GM10248 (cell line): ENCODE measurements at regions of chr14 and their contacts with region 1.

Region 1: DNA sequence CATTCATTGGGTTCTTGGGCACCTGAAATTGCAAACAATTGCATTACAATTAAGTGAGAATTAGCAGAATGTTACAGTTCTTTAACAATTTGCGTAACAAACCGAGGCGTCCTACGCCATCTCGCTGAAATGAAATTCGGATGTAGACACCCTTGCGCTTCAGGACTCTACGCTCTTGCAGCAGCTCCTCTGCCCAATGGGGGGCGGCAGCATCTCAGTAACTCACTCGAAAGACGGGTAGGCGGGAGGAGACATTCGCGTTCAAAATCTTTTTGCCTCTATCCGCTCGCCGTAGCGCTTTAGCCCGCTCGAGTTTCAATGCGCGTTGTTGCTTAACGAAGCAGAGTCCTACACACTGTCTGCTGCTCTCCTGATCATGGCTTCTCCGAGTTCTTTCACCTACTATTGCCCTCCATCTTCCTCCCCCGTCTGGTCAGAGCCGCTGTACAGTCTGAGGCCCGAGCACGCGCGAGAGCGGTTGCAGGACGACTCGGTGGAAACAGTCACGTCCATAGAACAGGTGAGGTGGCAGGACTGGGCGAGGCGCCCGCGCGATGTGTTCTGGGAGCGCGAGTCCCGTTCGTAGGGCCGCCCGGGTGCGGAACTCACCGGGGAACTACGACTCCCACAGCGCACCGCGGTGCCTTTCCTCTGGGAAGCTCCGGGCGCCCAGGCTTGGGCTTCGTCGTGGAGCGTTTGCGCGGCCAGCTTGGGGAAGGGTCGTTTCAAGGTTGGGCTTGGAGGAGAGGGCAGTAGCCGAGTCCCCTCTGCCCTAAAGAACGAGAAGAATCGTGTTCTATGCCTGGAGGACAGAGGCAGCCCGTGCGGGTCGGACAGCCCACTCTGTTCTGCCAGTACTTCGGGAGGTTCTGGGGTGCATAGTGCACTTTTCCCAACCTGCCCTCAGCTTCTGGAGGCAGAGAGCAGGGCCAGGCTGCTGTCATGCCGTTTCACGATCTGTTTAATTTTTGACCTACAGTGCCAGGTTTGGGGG is at the start of gene FNTB:
- DNase-seq: peak; percentile 94
- CTCF ChIP-seq: peak; percentile 98

Region 2: DNA sequence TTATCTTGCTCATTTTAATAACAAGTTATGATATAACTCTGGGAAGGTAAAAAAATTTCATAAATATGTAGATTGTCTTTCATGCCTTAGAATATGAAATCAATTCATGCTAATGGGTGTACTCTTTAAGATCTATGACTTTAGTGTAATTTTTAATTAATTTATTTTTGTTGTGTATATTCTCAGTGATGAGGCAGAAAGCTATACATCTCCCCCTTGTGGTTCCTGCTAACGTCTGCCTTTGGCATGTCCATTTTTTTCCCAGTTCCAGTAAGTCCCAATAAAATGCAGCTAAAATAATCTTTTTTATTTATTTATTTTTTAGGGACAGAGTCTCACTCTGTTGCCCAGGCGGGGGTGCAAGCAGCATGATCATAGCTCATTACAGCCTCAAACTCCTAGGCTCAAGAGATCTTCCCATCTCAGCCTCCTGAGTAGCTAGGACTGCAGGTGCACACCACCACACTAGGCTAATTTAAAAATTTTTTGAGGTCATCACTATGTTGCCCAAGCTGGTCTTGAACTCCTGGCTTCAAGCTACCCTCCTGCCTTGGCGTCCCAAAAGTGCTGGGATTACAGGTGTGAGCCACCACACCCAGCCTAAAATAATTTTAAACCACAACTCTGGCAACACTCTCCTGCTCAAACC is 75.9 kb before region 1 on chr14:
- CTCF ChIA-PET with region 1: no interaction called
- POLR2A ChIA-PET with region 1: no interaction called
- DNase-seq: no peak
- CTCF ChIP-seq: peak; percentile 38

Region 3: DNA sequence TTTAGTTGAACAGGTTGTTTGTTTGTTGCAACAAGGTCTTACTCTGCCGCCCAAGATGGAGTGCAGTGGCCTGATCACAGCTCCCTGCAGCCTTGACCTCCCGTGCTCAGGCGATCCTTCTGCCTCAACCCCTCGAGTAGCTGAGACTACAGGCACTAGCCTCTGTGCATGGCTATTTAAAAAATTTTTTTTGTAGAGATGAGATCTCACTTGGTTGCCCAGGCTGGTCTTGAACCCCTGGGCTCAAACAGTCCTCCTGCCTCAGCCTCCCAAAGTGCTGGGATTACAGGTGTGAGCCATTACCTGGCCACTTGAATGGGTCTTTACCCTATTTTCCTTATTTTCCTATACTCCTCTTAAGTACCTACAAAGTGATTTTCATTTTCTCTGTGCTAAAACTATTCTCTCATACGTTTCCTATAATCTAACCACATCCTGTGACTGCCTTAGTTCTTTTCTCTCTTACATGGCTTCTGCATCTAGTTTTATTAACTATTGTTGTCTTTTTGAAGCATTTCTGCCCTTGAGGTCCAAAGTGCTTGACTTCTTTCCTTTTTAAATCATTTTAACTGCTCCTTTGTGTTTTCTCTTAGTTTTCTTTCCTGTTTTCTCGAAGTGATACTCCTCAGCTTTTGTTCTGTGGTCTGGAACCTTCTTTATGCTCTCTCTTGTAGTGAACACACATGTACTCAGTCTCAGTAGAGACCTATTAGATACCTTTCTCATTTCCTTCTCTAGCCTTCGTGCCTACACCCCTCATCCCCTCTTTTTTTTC is 58.4 kb before region 1 on chr14:
- CTCF ChIA-PET with region 1: interaction called, 12 read pairs
- POLR2A ChIA-PET with region 1: no interaction called
- DNase-seq: no peak
- CTCF ChIP-seq: no peak

Region 4: DNA sequence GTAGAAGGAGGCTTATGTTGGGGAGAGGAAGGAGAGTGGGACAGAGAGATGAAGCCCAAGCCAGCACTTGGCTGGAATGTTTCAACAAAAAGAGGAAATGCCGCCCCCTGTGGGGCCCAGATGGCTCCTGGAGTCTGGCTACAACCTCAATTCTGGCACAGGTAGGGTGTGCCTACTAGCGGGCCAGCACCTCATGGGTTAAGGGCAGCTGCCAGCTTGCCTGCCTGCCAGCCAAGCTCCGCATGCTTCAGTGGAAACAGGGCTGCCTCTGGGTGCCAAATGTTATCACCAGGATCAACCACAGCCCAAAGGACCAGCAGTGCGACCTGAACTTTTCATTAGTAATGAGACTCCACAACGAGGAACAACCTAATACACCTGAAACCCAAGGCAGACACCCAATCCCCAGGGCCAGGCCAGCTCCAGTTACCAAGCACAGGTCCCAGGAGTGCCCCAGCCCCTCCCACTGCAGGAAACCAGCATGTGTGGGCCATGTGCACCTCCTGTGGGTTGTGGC is 26.1 kb before region 1 on chr14:
- CTCF ChIA-PET with region 1: interaction called, 12 read pairs
- POLR2A ChIA-PET with region 1: no interaction called
- DNase-seq: no peak
- CTCF ChIP-seq: no peak

Region 5: DNA sequence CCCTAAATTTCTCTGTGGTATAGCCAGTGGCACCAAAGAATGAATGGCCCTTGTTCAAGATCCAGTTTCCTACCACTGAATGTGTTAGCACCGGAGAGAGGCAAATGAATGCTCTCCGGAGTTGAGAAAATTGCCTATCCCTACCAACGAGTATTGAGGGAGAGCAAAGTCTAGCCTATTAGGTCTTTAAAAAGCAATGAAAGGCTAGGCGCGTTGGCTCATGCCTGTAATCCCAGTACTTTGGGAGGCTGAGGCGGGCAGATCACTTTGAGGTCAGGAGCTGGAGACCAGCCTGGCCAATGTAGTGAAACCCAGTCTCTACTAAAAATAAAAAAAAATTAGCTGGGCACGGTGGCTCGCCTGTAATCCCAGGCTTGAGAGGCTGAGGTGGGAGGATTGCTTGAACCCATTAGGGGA is 13.8 kb before region 1 on chr14:
- CTCF ChIA-PET with region 1: interaction called, 31 read pairs
- POLR2A ChIA-PET with region 1: no interaction called
- DNase-seq: no peak
- CTCF ChIP-seq: no peak

Region 6: GRCh38 chr14:64997108-64997794 is 10.4 kb after region 1 on chr14:
- CTCF ChIA-PET with region 1: interaction called, 114 read pairs
- POLR2A ChIA-PET with region 1: no interaction called
- DNase-seq: no peak
- CTCF ChIP-seq: no peak

Region 7: DNA sequence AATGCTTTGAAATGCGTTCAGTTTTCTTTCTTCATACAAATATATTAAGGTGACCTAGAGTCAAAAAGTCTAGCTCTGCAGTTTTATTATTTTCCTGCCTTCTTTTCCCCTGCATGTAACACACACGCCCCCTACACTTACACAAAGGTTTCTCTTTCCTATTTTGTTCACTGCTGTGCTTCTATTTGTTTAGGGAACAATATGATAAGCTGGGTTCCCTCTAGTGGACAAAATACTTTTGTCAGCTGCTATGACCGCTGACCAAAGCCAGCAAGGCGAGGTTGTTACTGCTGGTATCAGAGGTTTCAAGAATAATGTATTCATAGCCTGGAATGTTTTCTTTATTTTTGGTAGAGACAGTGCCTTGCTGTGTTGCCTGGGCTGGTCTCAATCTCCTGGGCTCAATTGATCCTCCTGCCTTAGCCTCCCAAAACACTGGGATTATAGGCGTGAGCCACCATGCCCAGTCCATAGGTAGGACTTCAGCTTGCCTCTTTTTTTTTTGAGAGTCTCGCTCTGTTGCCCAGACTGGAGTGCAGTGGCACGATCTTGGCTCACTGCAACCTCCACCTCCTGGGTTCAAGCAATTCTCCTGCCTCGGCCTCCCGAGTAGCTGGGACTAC is 33.2 kb after region 1 on chr14:
- CTCF ChIA-PET with region 1: interaction called, 162 read pairs
- POLR2A ChIA-PET with region 1: interaction called, 3 read pairs
- DNase-seq: peak; percentile 60
- CTCF ChIP-seq: peak; percentile 61

Region 8: GRCh38 chr14:65062096-65063077 is 75.5 kb after region 1 on chr14:
- CTCF ChIA-PET with region 1: no interaction called
- POLR2A ChIA-PET with region 1: no interaction called
- DNase-seq: no peak
- CTCF ChIP-seq: no peak